Right cardiac atrium (tissue), 5 donors: ENCODE measurements at regions of chr14 and their contacts with region 1.

Region 1: GRCh38 chr14:103546652-103547454 is 15.6 kb downstream of the BAG5 start:
- DNase-seq: peak; percentile 71 to 91 (median 89)
- ATAC-seq: peak in 1 of 2 donors; percentile 6
- H3K4me3 ChIP-seq: no peak overlapping the region
- H3K27ac ChIP-seq: no peak overlapping the region
- H3K4me1 ChIP-seq: peaks cover 5% of the 10 kb centered on the region
- H3K27me3 ChIP-seq: no peaks in the 10 kb centered on the region

Region 2: GRCh38 chr14:103500148-103500990 is 46.5 kb before region 1 on chr14:
- intact Hi-C with region 1: loop called in 3 of 4 experiments (anchors 5 kb)
- DNase-seq: peak; percentile 93 to 98 (median 95)
- ATAC-seq: peak; percentile 86 to 90
- H3K4me3 ChIP-seq: no peak overlapping the region
- H3K27ac ChIP-seq: no peak overlapping the region
- H3K4me1 ChIP-seq: no peaks in the 10 kb centered on the region
- H3K27me3 ChIP-seq: no peaks in the 10 kb centered on the region

Region 3: GRCh38 chr14:103518422-103519042 is 28.3 kb before region 1 on chr14:
- intact Hi-C with region 1: loop called in 2 of 4 experiments (anchors 2 to 5 kb)
- DNase-seq: peak; percentile 75 to 91 (median 91)
- ATAC-seq: peak; percentile 28 to 49
- H3K4me3 ChIP-seq: no peak overlapping the region
- H3K27ac ChIP-seq: no peak overlapping the region
- H3K4me1 ChIP-seq: peaks cover 7% of the 10 kb centered on the region
- H3K27me3 ChIP-seq: no peaks in the 10 kb centered on the region